ENCODE measurements at regions of chr3 and their contacts with region 1.

Region 1: DNA sequence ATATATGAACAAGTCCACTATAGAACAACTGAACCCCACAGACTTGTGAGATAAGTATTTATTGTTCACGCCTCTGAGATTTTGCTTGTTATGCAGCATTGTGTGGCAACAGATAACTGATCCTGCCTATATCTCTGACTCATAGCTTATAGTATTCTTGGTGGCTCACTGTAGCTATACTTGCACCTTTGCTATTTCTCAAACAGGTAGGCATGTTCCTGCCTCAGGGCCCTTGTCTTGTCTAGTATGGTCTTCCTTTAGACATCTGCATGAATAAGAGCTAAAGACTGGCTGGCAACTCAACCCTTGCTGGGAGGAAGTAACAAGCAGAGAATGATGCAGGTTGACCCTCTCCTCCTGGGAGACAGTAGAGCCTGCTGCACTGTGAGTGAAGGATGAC is 256.1 kb downstream of the CHST2 start:
- DNase-seq: no peak

Region 2: GRCh38 chr3:143389388-143389787 is 13.7 kb after region 1 on chr3:
- CTCF ChIA-PET with region 1: interaction called, 12 read pairs
- POLR2A ChIA-PET with region 1: no interaction called
- DNase-seq: no peak

Measured in HEK293T (cell line).